CD4-positive, alpha-beta T cell (primary cell): ENCODE measurements at regions of chr16 and their contacts with region 1.

Region 1: GRCh38 chr16:88686439-88687253 is at the start of gene SNAI3:
- DNase-seq: peak; percentile 63 to 90 (median 80)
- ATAC-seq: peak; percentile 78
- H3K4me3 ChIP-seq: peak within 1 kb of the TSS; percentile 77
- H3K4me3 Mint-ChIP-seq: peak within 1 kb of the TSS; percentile 87
- H3K27ac ChIP-seq: peak within 1 kb of the TSS; percentile 29 to 56
- H3K27ac Mint-ChIP-seq: peak within 1 kb of the TSS; percentile 80
- H3K4me1 ChIP-seq: peaks cover 80% of the 10 kb centered on the region
- H3K4me1 Mint-ChIP-seq: peaks cover 58% of the 10 kb centered on the region
- H3K27me3 ChIP-seq: no peaks in the 10 kb centered on the region
- H3K27me3 Mint-ChIP-seq: no peaks in the 10 kb centered on the region
- CTCF ChIP-seq: no peak
- total RNA-seq, gene SNAI3: 3.0 to 3.5 TPM

Region 2: GRCh38 chr16:88639231-88640038 is 47.2 kb before region 1 on chr16:
- CTCF ChIA-PET with region 1: interaction called, 7 read pairs
- POLR2A ChIA-PET with region 1: interaction called, 3 read pairs
- intact Hi-C with region 1: loop called in 1 of 2 experiments (anchors 5 kb)
- DNase-seq: peak in 1 of 14 experiments; percentile 48
- ATAC-seq: no peak
- H3K4me3 ChIP-seq: no peak overlapping the region
- H3K4me3 Mint-ChIP-seq: no peak overlapping the region
- H3K27ac ChIP-seq: no peak overlapping the region
- H3K27ac Mint-ChIP-seq: no peak overlapping the region
- H3K4me1 ChIP-seq: peaks cover 61% of the 10 kb centered on the region
- H3K4me1 Mint-ChIP-seq: peaks cover 39% of the 10 kb centered on the region
- H3K27me3 ChIP-seq: peaks cover 13 to 19% of the 10 kb centered on the region in 2 experiments
- H3K27me3 Mint-ChIP-seq: peaks cover 25% of the 10 kb centered on the region
- CTCF ChIP-seq: no peak

Region 3: GRCh38 chr16:88650749-88651275 is 35.8 kb before region 1 on chr16 and contains the start of gene CYBA:
- CTCF ChIA-PET with region 1: no interaction called
- POLR2A ChIA-PET with region 1: interaction called, 3 read pairs
- intact Hi-C with region 1: loop called (anchors 5 kb)
- DNase-seq: peak; percentile 64 to 91 (median 76)
- ATAC-seq: peak; percentile 76
- H3K4me3 ChIP-seq: peak within 1 kb of the TSS; percentile 96
- H3K4me3 Mint-ChIP-seq: peak within 1 kb of the TSS; percentile 93
- H3K27ac ChIP-seq: peak within 1 kb of the TSS; percentile 81 to 94
- H3K27ac Mint-ChIP-seq: peak within 1 kb of the TSS; percentile 95
- H3K4me1 ChIP-seq: peaks cover 56% of the 10 kb centered on the region
- H3K4me1 Mint-ChIP-seq: peaks cover 14% of the 10 kb centered on the region
- H3K27me3 ChIP-seq: no peaks in the 10 kb centered on the region
- H3K27me3 Mint-ChIP-seq: no peaks in the 10 kb centered on the region
- CTCF ChIP-seq: no peak
- total RNA-seq, gene CYBA: 292 to 294 TPM

Region 4: GRCh38 chr16:88706288-88706964 is 19.8 kb after region 1 on chr16 and contains the starts of genes CTU2 and RNF166:
- CTCF ChIA-PET with region 1: interaction called, 23 read pairs
- POLR2A ChIA-PET with region 1: interaction called, 71 read pairs
- intact Hi-C with region 1: loop called in 1 of 2 experiments (anchors 1 kb)
- DNase-seq: peak; percentile 81 to 98 (median 90)
- ATAC-seq: peak; percentile 62
- H3K4me3 ChIP-seq: peak within 1 kb of the TSS; percentile 88
- H3K4me3 Mint-ChIP-seq: peak within 1 kb of the TSS; percentile 99
- H3K27ac ChIP-seq: peak within 1 kb of the TSS; percentile 93 to 96
- H3K27ac Mint-ChIP-seq: peak within 1 kb of the TSS; percentile 100
- H3K4me1 ChIP-seq: peaks cover 56% of the 10 kb centered on the region
- H3K4me1 Mint-ChIP-seq: peaks cover 53% of the 10 kb centered on the region
- H3K27me3 ChIP-seq: no peaks in the 10 kb centered on the region
- H3K27me3 Mint-ChIP-seq: no peaks in the 10 kb centered on the region
- CTCF ChIP-seq: no peak
- total RNA-seq, gene CTU2: 39.3 to 44.0 TPM
- total RNA-seq, gene RNF166: 334 to 355 TPM